AG04450 (cell line): ENCODE measurements at regions of chr7 and their contacts with region 1.

Region 1: GRCh38 chr7:136405931-136406777 is 429.0 kb upstream of the MTPN start:
- DNase-seq: peak; percentile 36
- H3K4me3 ChIP-seq: no peak overlapping the region
- H3K27ac ChIP-seq: no peak overlapping the region
- H3K27me3 ChIP-seq: no peaks in the 10 kb centered on the region
- CTCF ChIP-seq: peak; percentile 81

Region 2: GRCh38 chr7:136245327-136246004 is 160.7 kb before region 1 on chr7:
- CTCF ChIA-PET with region 1: no interaction called
- POLR2A ChIA-PET with region 1: no interaction called
- DNase-seq: no peak
- H3K4me3 ChIP-seq: no peak overlapping the region
- H3K27ac ChIP-seq: no peak overlapping the region
- H3K27me3 ChIP-seq: no peaks in the 10 kb centered on the region
- CTCF ChIP-seq: no peak

Region 3: GRCh38 chr7:136687693-136688322 is 281.7 kb after region 1 on chr7:
- CTCF ChIA-PET with region 1: interaction called, 29 read pairs
- POLR2A ChIA-PET with region 1: no interaction called
- DNase-seq: peak; percentile 3
- H3K4me3 ChIP-seq: no peak overlapping the region
- H3K27ac ChIP-seq: no peak overlapping the region
- H3K27me3 ChIP-seq: no peaks in the 10 kb centered on the region
- CTCF ChIP-seq: peak; percentile 72